ENCODE measurements at regions of chr3 and their contacts with region 1.

Region 1: GRCh38 chr3:158801696-158802408 is at the start of gene MFSD1:
- DNase-seq: peak; percentile 90
- ATAC-seq: peak; percentile 89
- H3K4me3 ChIP-seq: peak within 1 kb of the TSS; percentile 83 to 97 (median 91)
- H3K4me3 Mint-ChIP-seq: peak within 1 kb of the TSS; percentile 94
- H3K27ac ChIP-seq: peak within 1 kb of the TSS; percentile 72 to 83
- H3K27ac Mint-ChIP-seq: peak within 1 kb of the TSS; percentile 92
- H3K4me1 ChIP-seq: peaks cover 16 to 22% of the 10 kb centered on the region in 2 donors
- H3K4me1 Mint-ChIP-seq: peaks cover 43% of the 10 kb centered on the region
- H3K27me3 ChIP-seq: no peaks in the 10 kb centered on the region
- H3K27me3 Mint-ChIP-seq: no peaks in the 10 kb centered on the region
- CTCF ChIP-seq: no peak
- total RNA-seq, gene MFSD1: 31.8 and 32.7 TPM in 2 replicates

Region 2: DNA sequence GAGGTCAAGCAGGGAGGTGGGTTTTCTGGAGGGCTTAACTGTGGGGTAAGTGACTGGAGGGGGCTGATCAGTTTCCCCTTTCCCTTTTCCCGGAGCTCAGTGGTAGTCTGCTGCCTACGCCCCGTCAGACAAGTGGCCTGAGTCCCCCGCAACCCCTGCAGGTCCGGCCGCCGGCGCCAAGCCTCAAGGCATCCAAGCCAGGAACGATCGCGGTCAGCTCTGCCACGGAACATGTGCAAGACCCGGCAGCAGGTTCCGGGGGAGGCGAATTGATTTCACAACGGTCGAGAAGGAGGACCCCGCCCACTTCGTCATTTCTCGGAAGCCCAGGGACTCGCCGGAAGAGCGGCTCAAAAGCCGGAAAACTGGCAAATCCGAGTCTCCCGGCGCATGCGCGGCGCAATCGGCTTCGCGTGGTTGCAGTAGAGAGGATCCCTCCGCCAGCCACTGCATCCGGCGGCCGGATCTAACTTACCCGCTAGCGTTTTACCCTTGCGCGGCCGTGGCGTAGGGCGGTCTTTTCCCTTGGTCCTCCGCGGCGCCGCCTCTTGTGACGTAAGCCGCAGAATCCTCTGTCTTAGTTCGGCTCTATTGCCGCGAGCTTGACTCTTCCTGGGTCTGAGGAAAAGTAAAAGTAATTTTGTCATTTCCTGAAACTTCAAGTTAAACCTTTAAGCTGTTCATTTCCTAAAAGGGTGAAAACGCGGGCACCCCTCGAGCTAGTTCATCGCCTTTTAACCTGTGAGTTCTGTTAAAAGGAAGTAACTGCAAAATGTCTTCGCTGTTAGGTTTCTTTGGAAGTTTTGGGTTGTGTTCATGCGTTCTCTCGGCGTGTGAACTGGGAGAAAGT is 1627.0 kb before region 1 on chr3:
- CTCF ChIA-PET with region 1: no interaction called
- POLR2A ChIA-PET with region 1: no interaction called
- intact Hi-C with region 1: loop called (anchors 2 kb)
- DNase-seq: peak; percentile 99
- ATAC-seq: peak; percentile 91
- H3K4me3 ChIP-seq: peak overlapping the region; percentile 85 to 98 (median 93)
- H3K4me3 Mint-ChIP-seq: peak overlapping the region; percentile 91
- H3K27ac ChIP-seq: peak overlapping the region; percentile 89 to 97
- H3K27ac Mint-ChIP-seq: peak overlapping the region; percentile 97
- H3K4me1 ChIP-seq: peaks cover 19% of the 10 kb centered on the region in 2 donors
- H3K4me1 Mint-ChIP-seq: peaks cover 23% of the 10 kb centered on the region
- H3K27me3 ChIP-seq: no peaks in the 10 kb centered on the region
- H3K27me3 Mint-ChIP-seq: no peaks in the 10 kb centered on the region
- CTCF ChIP-seq: no peak

Region 3: DNA sequence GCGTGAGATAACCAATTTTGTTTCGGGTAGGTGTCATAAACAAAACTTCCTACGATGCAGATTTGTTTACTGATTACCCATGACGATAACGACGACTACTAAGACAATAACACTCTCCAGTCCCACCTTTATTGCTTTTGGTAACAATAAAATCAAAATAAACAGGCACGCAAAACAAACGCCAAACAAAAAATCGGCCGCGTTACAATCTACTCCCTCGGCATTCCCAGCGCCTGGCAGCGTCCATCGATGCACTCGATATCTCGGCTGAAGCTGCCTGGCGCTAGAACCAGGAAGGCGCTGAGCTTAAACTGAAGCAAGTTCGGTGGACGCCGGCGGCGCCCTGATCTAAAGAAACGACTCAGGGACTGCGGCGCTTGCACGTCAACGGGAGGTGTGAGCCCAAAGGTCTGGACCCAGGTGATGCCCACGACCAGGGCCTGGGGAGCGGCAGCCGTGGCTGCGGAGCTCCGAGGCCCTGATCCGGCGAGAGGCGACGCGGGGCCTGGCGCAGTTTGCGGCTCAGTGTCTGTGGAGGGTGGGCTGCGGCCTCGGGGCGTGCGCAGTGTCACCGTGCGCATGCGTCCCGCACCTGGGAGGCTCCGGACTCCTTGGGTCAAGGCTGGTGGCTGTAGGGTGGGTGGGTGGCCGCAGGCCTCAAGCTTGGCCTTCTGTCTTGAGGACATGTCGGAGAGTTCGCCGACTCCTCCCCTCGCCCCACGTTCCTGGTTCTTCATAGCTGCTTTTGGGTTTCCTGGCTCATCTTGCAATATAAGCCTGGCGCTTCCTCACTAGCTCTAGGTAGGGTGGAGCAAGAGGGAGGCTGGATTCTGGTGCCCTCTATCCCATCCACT is 691.8 kb before region 1 on chr3 and contains the start of gene RSRC1:
- CTCF ChIA-PET with region 1: no interaction called
- POLR2A ChIA-PET with region 1: no interaction called
- intact Hi-C with region 1: loop called (anchors 5 kb)
- DNase-seq: peak; percentile 89
- ATAC-seq: peak; percentile 87
- H3K4me3 ChIP-seq: peak within 1 kb of the TSS; percentile 85 to 93 (median 87)
- H3K4me3 Mint-ChIP-seq: peak within 1 kb of the TSS; percentile 87
- H3K27ac ChIP-seq: peak within 1 kb of the TSS; percentile 68 to 83
- H3K27ac Mint-ChIP-seq: peak within 1 kb of the TSS; percentile 75
- H3K4me1 ChIP-seq: peaks cover 42 to 54% of the 10 kb centered on the region in 2 donors
- H3K4me1 Mint-ChIP-seq: peaks cover 45% of the 10 kb centered on the region
- H3K27me3 ChIP-seq: peaks cover 4 to 40% (median 35%) of the 10 kb centered on the region in 4 experiments
- H3K27me3 Mint-ChIP-seq: peaks cover 35% of the 10 kb centered on the region
- CTCF ChIP-seq: no peak
- total RNA-seq, gene RSRC1: 46.3 and 54.6 TPM in 2 replicates

Region 4: GRCh38 chr3:158644345-158644908 is 157.4 kb before region 1 on chr3 and contains the start of gene GFM1:
- CTCF ChIA-PET with region 1: interaction called, 7 read pairs
- POLR2A ChIA-PET with region 1: no interaction called
- intact Hi-C with region 1: loop called (anchors 2 kb)
- DNase-seq: peak; percentile 94
- ATAC-seq: peak; percentile 96
- H3K4me3 ChIP-seq: peak within 1 kb of the TSS; percentile 75 to 96 (median 91)
- H3K4me3 Mint-ChIP-seq: peak within 1 kb of the TSS; percentile 99
- H3K27ac ChIP-seq: peak within 1 kb of the TSS; percentile 63 to 85
- H3K27ac Mint-ChIP-seq: peak within 1 kb of the TSS; percentile 78
- H3K4me1 ChIP-seq: peaks cover 4 to 11% of the 10 kb centered on the region in 2 donors
- H3K4me1 Mint-ChIP-seq: peaks cover 22% of the 10 kb centered on the region
- H3K27me3 ChIP-seq: no peaks in the 10 kb centered on the region
- H3K27me3 Mint-ChIP-seq: no peaks in the 10 kb centered on the region
- CTCF ChIP-seq: peak; percentile 84
- total RNA-seq, gene GFM1: 46.0 and 46.8 TPM in 2 replicates

Region 5: DNA sequence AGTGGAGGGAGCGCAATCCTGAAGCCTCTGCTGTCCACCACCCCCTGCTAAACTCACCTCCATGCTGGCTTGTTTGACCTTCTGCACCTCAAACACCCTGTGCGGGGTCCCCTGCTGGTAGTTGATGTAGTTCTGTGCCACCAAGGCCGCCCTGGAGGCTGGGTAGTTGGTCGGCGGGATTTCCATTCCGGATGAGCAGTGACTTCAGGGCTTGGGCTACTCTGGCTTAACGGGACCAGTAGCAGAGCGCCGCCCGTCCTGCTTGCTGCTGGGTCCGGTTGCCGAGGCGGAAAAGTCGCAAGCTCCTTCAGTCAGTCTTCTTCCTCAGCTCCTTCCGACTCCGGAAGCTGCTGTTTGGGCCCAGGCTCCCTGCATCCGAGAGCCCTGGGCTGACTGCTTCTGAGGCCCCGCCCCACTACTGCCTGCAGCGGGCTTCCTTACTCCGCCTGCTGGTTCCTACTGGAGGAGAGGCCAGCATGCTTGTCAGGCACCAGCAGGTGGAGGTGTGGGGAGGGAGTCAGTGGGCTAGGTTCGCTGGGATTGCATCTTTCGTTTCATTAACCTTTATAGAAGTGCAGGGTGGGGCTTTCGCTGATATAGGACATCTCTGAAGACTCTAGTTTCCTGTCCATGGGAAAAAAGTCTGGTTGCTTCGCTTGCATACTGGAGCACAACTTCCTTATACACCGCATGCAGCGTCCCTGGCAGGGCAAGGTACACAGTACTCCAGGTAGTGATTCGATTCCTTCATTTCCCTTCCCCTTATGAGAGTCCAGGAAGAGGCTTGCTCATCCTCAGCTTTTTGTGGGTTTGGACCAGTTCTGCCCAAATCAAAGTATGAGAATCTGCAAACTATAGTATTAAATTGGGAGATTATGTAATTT is 129.3 kb before region 1 on chr3 and contains the start of gene LXN:
- CTCF ChIA-PET with region 1: no interaction called
- POLR2A ChIA-PET with region 1: no interaction called
- intact Hi-C with region 1: loop called (anchors 1 kb)
- DNase-seq: peak; percentile 78
- ATAC-seq: peak; percentile 97
- H3K4me3 ChIP-seq: peak within 1 kb of the TSS; percentile 58 to 80 (median 76)
- H3K4me3 Mint-ChIP-seq: peak within 1 kb of the TSS; percentile 96
- H3K27ac ChIP-seq: peak within 1 kb of the TSS; percentile 44 to 58
- H3K27ac Mint-ChIP-seq: peak within 1 kb of the TSS; percentile 92
- H3K4me1 ChIP-seq: peaks cover 11 to 12% of the 10 kb centered on the region in 2 donors
- H3K4me1 Mint-ChIP-seq: peaks cover 25% of the 10 kb centered on the region
- H3K27me3 ChIP-seq: no peaks in the 10 kb centered on the region
- H3K27me3 Mint-ChIP-seq: no peaks in the 10 kb centered on the region
- CTCF ChIP-seq: peak; percentile 48
- total RNA-seq, gene LXN: 5.1 and 7.9 TPM in 2 replicates

Region 6: DNA sequence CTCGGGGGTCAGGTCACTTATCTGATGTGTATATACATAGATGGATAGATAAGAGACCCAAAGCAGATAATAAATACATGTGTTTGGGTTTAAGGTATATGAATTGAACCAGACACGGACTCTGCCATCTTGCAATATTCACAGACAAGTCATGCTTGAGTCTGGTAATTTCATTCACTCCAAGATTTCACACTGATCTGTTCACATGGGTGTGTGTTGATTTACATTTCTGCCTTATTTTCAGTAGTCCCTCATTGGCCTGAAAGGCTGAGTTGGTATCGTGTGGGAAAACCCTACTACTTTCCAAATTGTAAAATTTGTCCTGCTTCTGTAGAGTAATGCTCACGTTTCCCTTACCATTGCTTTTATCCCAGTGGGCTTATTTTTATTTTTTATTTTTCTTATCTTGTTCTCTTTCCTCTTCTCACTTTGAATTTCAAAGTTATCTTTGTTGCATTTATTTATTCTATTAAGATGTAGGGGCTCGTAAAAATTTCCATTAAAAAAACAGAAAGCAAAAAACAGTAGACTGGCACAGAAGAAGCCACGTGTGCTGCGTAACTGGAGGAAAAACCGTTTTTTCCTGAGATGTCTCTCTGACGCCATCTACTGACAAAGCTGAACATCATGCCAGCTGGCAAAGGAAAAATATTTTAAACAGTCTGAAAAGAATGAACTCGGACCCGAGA is 10.8 kb before region 1 on chr3:
- CTCF ChIA-PET with region 1: interaction called, 26 read pairs
- POLR2A ChIA-PET with region 1: interaction called, 4 read pairs
- intact Hi-C with region 1: loop called (anchors 1 kb)
- DNase-seq: peak; percentile 67
- ATAC-seq: peak; percentile 47
- H3K4me3 ChIP-seq: no peak overlapping the region
- H3K4me3 Mint-ChIP-seq: peak overlapping the region; percentile 42
- H3K27ac ChIP-seq: no peak overlapping the region
- H3K27ac Mint-ChIP-seq: no peak overlapping the region
- H3K4me1 ChIP-seq: peaks cover 5 to 7% of the 10 kb centered on the region in 2 donors
- H3K4me1 Mint-ChIP-seq: peaks cover 3% of the 10 kb centered on the region
- H3K27me3 ChIP-seq: no peaks in the 10 kb centered on the region
- H3K27me3 Mint-ChIP-seq: peaks cover 4% of the 10 kb centered on the region
- CTCF ChIP-seq: peak; percentile 86

Region 7: DNA sequence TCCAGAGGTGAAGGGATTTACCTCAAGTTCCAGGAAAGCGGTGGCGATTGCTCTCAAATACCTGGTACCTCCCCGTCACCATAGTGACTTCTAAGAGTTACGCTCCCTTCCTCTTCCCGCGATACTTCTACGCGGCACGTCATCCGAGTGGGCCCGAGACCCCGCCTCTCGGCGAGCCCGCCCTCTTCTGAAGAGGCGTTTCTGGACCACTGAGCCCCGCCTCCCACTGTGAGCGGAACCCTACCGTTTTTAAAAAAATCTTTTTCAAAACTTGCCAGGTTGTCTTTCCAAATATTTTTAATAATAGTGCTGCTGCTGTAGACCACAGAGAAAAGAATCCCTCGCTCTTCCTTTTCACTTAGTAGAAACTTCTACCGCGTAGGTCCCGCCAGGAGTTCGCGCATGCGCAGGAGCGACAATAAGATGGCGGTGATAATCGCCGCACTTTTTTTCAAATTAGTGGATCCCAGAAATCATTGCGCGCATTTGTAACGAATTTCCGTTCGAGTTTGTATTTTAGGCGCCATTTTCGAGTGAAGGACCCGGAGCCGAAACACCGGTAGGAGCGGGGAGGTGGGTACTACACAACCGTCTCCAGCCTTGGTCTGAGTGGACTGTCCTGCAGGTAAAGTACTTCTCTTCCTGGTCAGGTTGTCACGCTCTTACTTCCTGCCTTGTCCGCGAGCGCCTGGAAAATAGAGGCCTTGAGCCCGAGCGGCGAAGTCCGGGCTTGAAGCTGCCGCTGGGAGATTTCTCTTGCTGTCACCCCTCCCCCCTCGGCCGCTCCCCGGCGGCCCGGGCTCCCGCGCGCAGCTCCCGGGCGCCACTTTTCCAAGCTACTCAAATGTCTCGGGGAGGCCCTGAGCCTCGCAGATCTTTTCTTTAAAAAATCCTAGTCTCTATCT is 1597.5 kb after region 1 on chr3 and contains the starts of genes IFT80 and SMC4:
- CTCF ChIA-PET with region 1: no interaction called
- POLR2A ChIA-PET with region 1: no interaction called
- intact Hi-C with region 1: loop called (anchors 5 kb)
- DNase-seq: peak; percentile 97
- ATAC-seq: peak; percentile 96
- H3K4me3 ChIP-seq: peak within 1 kb of the TSS; percentile 71 to 97 (median 85)
- H3K4me3 Mint-ChIP-seq: peak within 1 kb of the TSS; percentile 98
- H3K27ac ChIP-seq: peak within 1 kb of the TSS; percentile 69 to 97
- H3K27ac Mint-ChIP-seq: peak within 1 kb of the TSS; percentile 98
- H3K4me1 ChIP-seq: peaks cover 26 to 45% of the 10 kb centered on the region in 2 donors
- H3K4me1 Mint-ChIP-seq: peaks cover 43% of the 10 kb centered on the region
- H3K27me3 ChIP-seq: peaks cover 0 to 25% (median 7%) of the 10 kb centered on the region in 4 experiments
- H3K27me3 Mint-ChIP-seq: no peaks in the 10 kb centered on the region
- CTCF ChIP-seq: no peak
- total RNA-seq, gene IFT80: 44.1 and 47.0 TPM in 2 replicates
- total RNA-seq, gene SMC4: 53.8 and 55.1 TPM in 2 replicates

Measured in B cell (primary cell).